ENCODE measurements at regions of chr14 and their contacts with region 1.

Region 1: GRCh38 chr14:70398706-70399431 is 18.0 kb downstream of the SYNJ2BP start:
- DNase-seq: no peak
- ATAC-seq: peak in 2 of 4 donors; percentile 10 to 46
- H3K4me3 ChIP-seq: no peak overlapping the region
- H3K27ac ChIP-seq: no peak overlapping the region
- H3K4me1 ChIP-seq: peaks cover 0 to 9% (median 0%) of the 10 kb centered on the region in 12 donors
- H3K27me3 ChIP-seq: no peaks in the 10 kb centered on the region
- CTCF ChIP-seq: no peak
- POLR2A ChIP-seq: no peak

Region 2: GRCh38 chr14:70425354-70425753 is 26.5 kb after region 1 on chr14:
- intact Hi-C with region 1: loop called in 1 of 10 experiments (anchors 2 kb)
- DNase-seq: peak in 2 of 5 donors; percentile 44 to 50
- ATAC-seq: no peak
- H3K4me3 ChIP-seq: no peak overlapping the region
- H3K27ac ChIP-seq: no peak overlapping the region
- H3K4me1 ChIP-seq: no peaks in the 10 kb centered on the region
- H3K27me3 ChIP-seq: no peaks in the 10 kb centered on the region
- CTCF ChIP-seq: no peak
- POLR2A ChIP-seq: no peak

Region 3: DNA sequence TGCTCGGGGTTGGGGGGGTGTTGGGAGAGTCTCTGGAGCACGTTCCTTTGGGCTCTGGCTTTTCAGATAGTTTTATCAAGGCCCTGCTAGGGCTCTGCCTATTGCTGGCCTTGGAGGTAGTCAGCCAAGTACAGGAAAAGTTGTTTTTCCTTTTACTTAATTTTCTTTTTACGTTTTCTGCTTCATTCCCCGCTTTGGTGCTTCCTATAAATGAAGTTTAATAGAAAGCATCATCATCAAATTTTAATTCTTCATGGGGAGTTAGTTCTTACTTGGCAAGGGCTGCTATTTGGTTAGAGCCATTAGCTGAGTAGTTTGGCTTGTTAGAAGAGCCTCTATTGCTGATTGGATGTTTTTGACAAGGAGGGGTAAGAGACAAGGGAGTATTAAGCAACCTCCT is 38.0 kb after region 1 on chr14:
- intact Hi-C with region 1: no loop called
- DNase-seq: no peak
- ATAC-seq: no peak
- H3K4me3 ChIP-seq: no peak overlapping the region
- H3K27ac ChIP-seq: no peak overlapping the region
- H3K4me1 ChIP-seq: no peaks in the 10 kb centered on the region
- H3K27me3 ChIP-seq: no peaks in the 10 kb centered on the region
- CTCF ChIP-seq: no peak
- POLR2A ChIP-seq: no peak

Measured in heart left ventricle (tissue), 16 donors.